K562 (cell line): ENCODE measurements at regions of chr16 and their contacts with region 1.

Region 1: GRCh38 chr16:57519796-57520360 is 16.5 kb downstream of the CCDC102A start:
- DNase-seq: peak; percentile 82 to 85 (median 83)
- ATAC-seq: peak; percentile 98
- H3K4me3 ChIP-seq: no peak overlapping the region
- H3K27ac ChIP-seq: no peak overlapping the region
- H3K4me1 ChIP-seq: peaks cover 0 to 14% of the 10 kb centered on the region in 2 experiments; a peak in 1 of 5 replicates
- H3K27me3 ChIP-seq: no peaks in the 10 kb centered on the region
- CTCF ChIP-seq: peak; percentile 96 to 98 (median 96)
- EP300 ChIP-seq: no peak
- POLR2A ChIP-seq: no peak
- RAD21 ChIP-seq: peak; percentile 94 to 98

Region 2: DNA sequence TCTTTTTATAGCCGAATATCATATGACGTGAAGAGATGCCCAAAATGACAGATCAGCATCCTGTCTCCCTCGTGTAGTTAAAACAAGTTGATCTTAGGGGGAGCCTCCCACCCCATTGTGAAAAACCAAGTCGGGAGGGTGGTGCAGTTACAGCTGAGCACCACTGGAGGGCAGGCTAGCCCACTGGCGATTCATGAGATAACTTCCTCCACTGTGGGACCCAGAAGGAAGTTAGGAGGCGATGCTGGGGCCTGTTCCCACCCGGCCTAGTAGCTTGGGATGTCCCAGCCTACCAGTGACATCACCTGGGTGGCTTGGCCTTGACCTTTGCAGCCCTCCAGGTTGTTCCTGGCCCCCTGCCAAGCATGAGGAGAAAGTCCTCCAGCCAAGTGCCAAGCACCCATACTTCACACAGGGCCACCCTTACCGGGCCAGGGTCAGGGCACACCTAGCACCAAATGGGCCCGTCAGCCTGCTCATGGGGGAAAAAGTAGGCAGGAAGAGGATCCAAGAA is 435.6 kb before region 1 on chr16:
- CTCF ChIA-PET with region 1: no interaction called
- POLR2A ChIA-PET with region 1: interaction called, 3 read pairs
- in situ Hi-C with region 1: no loop called
- intact Hi-C with region 1: loop called (anchors 10 kb)
- DNase-seq: peak; percentile 82 to 86 (median 84)
- ATAC-seq: peak; percentile 91
- H3K4me3 ChIP-seq: no peak overlapping the region
- H3K27ac ChIP-seq: no peak overlapping the region
- H3K4me1 ChIP-seq: no peaks in the 10 kb centered on the region; a peak in 1 of 5 replicates
- H3K27me3 ChIP-seq: peaks cover 7 to 24% of the 10 kb centered on the region in 2 experiments; a peak in 4 of 5 replicates
- CTCF ChIP-seq: peak; percentile 93 to 97 (median 96)
- EP300 ChIP-seq: no peak
- POLR2A ChIP-seq: no peak
- RAD21 ChIP-seq: peak; percentile 78 to 92

Region 3: GRCh38 chr16:57185944-57186871 is 333.7 kb before region 1 on chr16 and contains the starts of genes PSME3IP1 and RSPRY1:
- CTCF ChIA-PET with region 1: no interaction called
- POLR2A ChIA-PET with region 1: no interaction called
- in situ Hi-C with region 1: no loop called
- intact Hi-C with region 1: no loop called
- DNase-seq: peak; percentile 99 to 100 (median 100)
- ATAC-seq: peak; percentile 94
- H3K4me3 ChIP-seq: peak within 1 kb of the TSS; percentile 94
- H3K27ac ChIP-seq: peak within 1 kb of the TSS; percentile 93
- H3K4me1 ChIP-seq: peaks cover 6 to 9% of the 10 kb centered on the region in 2 experiments
- H3K27me3 ChIP-seq: no peaks in the 10 kb centered on the region
- CTCF ChIP-seq: no peak
- EP300 ChIP-seq: no peak
- POLR2A ChIP-seq: peak; percentile 88
- RAD21 ChIP-seq: no peak
- polyA plus RNA-seq, gene PSME3IP1: 63.8 to 142 TPM
- polyA plus RNA-seq, gene RSPRY1: 10.2 to 13.4 TPM

Region 4: DNA sequence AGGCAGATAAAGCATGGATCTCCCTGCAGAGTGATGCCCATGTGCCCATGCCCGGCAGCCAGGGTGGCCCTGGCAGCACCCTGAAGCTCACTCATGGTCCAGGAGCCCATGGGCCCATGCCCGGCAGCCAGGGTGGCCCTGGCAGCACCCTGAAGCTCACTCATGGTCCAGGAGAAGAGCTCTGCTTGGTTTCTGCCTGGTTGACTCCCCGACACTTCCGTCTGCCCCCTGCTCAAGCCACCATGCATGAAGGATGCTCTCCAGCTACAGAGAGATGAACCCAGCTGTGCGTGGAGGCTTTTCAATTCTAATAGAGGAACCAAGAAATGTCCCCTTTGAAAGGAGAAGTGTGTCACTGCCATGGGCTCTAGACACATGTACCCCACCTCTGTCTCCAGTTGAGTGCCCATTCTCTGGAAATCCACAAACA is 106.6 kb before region 1 on chr16:
- CTCF ChIA-PET with region 1: interaction called, 44 read pairs
- POLR2A ChIA-PET with region 1: no interaction called
- in situ Hi-C with region 1: loop called (anchors 5 kb)
- intact Hi-C with region 1: no loop called
- DNase-seq: no peak
- ATAC-seq: no peak
- H3K4me3 ChIP-seq: no peak overlapping the region
- H3K27ac ChIP-seq: no peak overlapping the region
- H3K4me1 ChIP-seq: peaks cover 0 to 25% of the 10 kb centered on the region in 2 experiments; a peak in 4 of 5 replicates
- H3K27me3 ChIP-seq: peaks cover 11 to 50% of the 10 kb centered on the region in 2 experiments; a peak in 4 of 5 replicates
- CTCF ChIP-seq: no peak
- EP300 ChIP-seq: no peak
- POLR2A ChIP-seq: no peak
- RAD21 ChIP-seq: no peak

Region 5: DNA sequence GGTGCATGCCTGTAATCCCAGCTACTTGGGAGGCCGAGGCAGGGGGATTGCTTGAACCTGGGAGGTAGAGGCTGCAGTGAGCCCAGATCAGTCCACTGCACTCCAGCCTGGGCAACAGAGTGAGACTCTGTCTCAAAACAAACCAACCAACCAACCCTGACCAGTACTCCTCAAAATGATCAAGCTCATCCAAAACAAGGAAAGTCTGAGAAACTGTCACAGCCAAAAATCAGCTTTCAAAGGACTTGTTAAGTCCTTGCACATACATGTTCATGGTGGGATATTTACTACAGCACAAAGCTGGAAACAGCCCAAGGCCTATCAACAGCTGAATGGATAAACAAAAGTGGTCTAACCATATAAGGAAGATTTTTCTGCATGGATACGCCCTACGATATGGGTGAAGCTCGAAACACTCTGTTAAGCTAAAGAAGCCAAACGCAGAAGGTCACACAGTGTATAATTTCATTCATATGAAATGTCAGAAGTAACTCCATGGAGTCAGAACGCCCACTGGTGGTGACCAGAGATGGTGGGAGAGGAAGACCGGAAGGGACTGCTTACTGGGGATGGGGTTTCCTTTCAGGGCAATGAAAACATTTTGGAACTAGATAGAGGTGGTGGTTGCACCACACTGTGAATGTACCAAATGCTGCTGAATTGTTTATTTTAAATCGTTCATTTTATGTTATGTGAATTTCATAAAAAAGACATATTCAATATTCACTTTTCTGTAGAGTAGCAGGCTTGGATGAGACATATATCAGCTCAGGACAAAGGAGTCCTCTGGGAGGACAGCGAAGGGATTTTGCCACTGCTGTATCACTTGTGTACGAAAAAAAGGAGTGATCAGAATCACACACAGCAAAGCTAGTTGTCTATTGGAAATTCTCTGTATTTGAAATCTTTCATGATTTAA is 97.6 kb before region 1 on chr16:
- CTCF ChIA-PET with region 1: interaction called, 44 read pairs
- POLR2A ChIA-PET with region 1: interaction called, 7 read pairs
- in situ Hi-C with region 1: loop called (anchors 5 kb)
- intact Hi-C with region 1: loop called (anchors 1 kb)
- DNase-seq: peak; percentile 45 to 76 (median 58)
- ATAC-seq: peak; percentile 89
- H3K4me3 ChIP-seq: no peak overlapping the region
- H3K27ac ChIP-seq: peak overlapping the region; percentile 27; the same call in 1 of the 3 replicates
- H3K4me1 ChIP-seq: peaks cover 3 to 4% of the 10 kb centered on the region in 2 experiments; a peak in 4 of 5 replicates
- H3K27me3 ChIP-seq: no peaks in the 10 kb centered on the region
- CTCF ChIP-seq: peak; percentile 84 to 93 (median 93)
- EP300 ChIP-seq: 0 out of 2 replicates have a peak, but pooled peaks have one; percentile 8
- POLR2A ChIP-seq: no peak
- RAD21 ChIP-seq: peak; percentile 74 to 78

Region 6: GRCh38 chr16:57475711-57476339 is 44.1 kb before region 1 on chr16:
- CTCF ChIA-PET with region 1: interaction called, 21 read pairs
- POLR2A ChIA-PET with region 1: no interaction called
- in situ Hi-C with region 1: loop called (anchors 5 kb)
- intact Hi-C with region 1: loop called (anchors 1 kb)
- DNase-seq: peak; percentile 88 to 92 (median 91)
- ATAC-seq: peak; percentile 96
- H3K4me3 ChIP-seq: no peak overlapping the region
- H3K27ac ChIP-seq: no peak overlapping the region
- H3K4me1 ChIP-seq: peaks cover 21 to 46% of the 10 kb centered on the region in 2 experiments
- H3K27me3 ChIP-seq: no peaks in the 10 kb centered on the region
- CTCF ChIP-seq: peak; percentile 84 to 88 (median 88)
- EP300 ChIP-seq: no peak
- POLR2A ChIP-seq: no peak
- RAD21 ChIP-seq: peak; percentile 59 to 72; a peak in 3 of 4 replicates

Region 7: GRCh38 chr16:57826706-57827625 is 307.1 kb after region 1 on chr16:
- CTCF ChIA-PET with region 1: no interaction called
- POLR2A ChIA-PET with region 1: no interaction called
- in situ Hi-C with region 1: no loop called
- intact Hi-C with region 1: no loop called
- DNase-seq: no peak
- ATAC-seq: peak; percentile 54
- H3K4me3 ChIP-seq: no peak overlapping the region
- H3K27ac ChIP-seq: no peak overlapping the region
- H3K4me1 ChIP-seq: peaks cover 0 to 5% of the 10 kb centered on the region in 2 experiments; a peak in 1 of 5 replicates
- H3K27me3 ChIP-seq: peaks cover 0 to 20% of the 10 kb centered on the region in 2 experiments; a peak in 2 of 5 replicates
- CTCF ChIP-seq: no peak
- EP300 ChIP-seq: no peak
- POLR2A ChIP-seq: no peak
- RAD21 ChIP-seq: no peak

Region 8: GRCh38 chr16:58716468-58716867 is 1196.6 kb after region 1 on chr16:
- CTCF ChIA-PET with region 1: no interaction called
- POLR2A ChIA-PET with region 1: no interaction called
- in situ Hi-C with region 1: no loop called
- intact Hi-C with region 1: no loop called
- DNase-seq: no peak
- ATAC-seq: no peak
- H3K4me3 ChIP-seq: no peak overlapping the region
- H3K27ac ChIP-seq: no peak overlapping the region
- H3K4me1 ChIP-seq: no peaks in the 10 kb centered on the region
- H3K27me3 ChIP-seq: no peaks in the 10 kb centered on the region
- CTCF ChIP-seq: no peak
- EP300 ChIP-seq: no peak
- POLR2A ChIP-seq: no peak
- RAD21 ChIP-seq: no peak